Sigmoid colon (tissue), 7 donors: ENCODE measurements at regions of chr21 and their contacts with region 1.

Region 1: GRCh38 chr21:35051287-35051818 is 2.3 kb upstream of the RUNX1 start:
- DNase-seq: peak; percentile 90
- H3K4me3 ChIP-seq: no peak overlapping the region
- H3K27ac ChIP-seq: peak overlapping the region in 3 of 4 donors; percentile 69 to 80 (median 79)
- H3K4me1 ChIP-seq: peaks cover 0 to 77% (median 69%) of the 10 kb centered on the region in 4 donors
- H3K27me3 ChIP-seq: no peaks in the 10 kb centered on the region
- CTCF ChIP-seq: peak in 2 of 4 experiments; percentile 26 to 34
- EP300 ChIP-seq: no peak
- POLR2A ChIP-seq: no peak

Region 2: GRCh38 chr21:35011681-35012080 is 39.7 kb before region 1 on chr21:
- intact Hi-C with region 1: no loop called
- DNase-seq: no peak
- H3K4me3 ChIP-seq: no peak overlapping the region
- H3K27ac ChIP-seq: no peak overlapping the region
- H3K4me1 ChIP-seq: no peaks in the 10 kb centered on the region
- H3K27me3 ChIP-seq: no peaks in the 10 kb centered on the region
- CTCF ChIP-seq: no peak
- EP300 ChIP-seq: no peak
- POLR2A ChIP-seq: no peak

Region 3: GRCh38 chr21:35204850-35205541 is 153.6 kb after region 1 on chr21:
- intact Hi-C with region 1: loop called (anchors 1 kb)
- DNase-seq: peak; percentile 89
- H3K4me3 ChIP-seq: peak overlapping the region in 3 of 4 donors; percentile 23 to 25 (median 24)
- H3K27ac ChIP-seq: peak overlapping the region; percentile 31 to 82 (median 68)
- H3K4me1 ChIP-seq: peaks cover 0 to 52% (median 43%) of the 10 kb centered on the region in 4 donors
- H3K27me3 ChIP-seq: no peaks in the 10 kb centered on the region
- CTCF ChIP-seq: peak in 1 of 4 experiments; percentile 15
- EP300 ChIP-seq: peak in 1 of 4 donors; percentile 9
- POLR2A ChIP-seq: no peak

Region 4: DNA sequence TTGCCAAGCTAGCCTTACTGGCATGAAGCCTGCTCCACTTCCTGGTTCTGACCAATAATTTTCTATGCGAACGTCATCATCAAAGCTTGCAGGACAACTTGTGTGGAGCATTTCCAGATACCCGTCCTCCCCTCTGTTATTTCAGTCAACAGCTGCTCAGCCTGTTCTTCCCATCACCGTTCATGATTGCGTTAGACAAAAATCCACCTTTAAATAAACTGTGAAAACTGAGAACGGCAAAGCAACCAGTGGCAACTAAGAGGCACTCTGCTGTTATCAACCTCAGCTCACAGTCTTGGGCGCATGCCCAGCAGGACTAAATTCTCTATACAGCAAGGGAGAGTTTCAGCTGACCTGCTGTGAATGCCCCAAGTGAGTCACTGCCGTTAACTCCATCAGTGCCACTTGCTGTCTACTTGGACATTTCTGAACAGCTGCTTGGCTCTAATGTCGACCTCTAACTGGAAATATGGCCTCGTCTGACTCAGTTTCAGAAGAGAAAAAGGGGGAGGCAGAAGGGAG is 205.2 kb after region 1 on chr21:
- intact Hi-C with region 1: loop called (anchors 5 kb)
- DNase-seq: peak; percentile 84
- H3K4me3 ChIP-seq: peak overlapping the region in 2 of 4 donors; percentile 14 to 24
- H3K27ac ChIP-seq: peak overlapping the region; percentile 1 to 72 (median 34)
- H3K4me1 ChIP-seq: peaks cover 0 to 19% (median 15%) of the 10 kb centered on the region in 4 donors
- H3K27me3 ChIP-seq: no peaks in the 10 kb centered on the region
- CTCF ChIP-seq: no peak
- EP300 ChIP-seq: no peak
- POLR2A ChIP-seq: no peak

Region 5: DNA sequence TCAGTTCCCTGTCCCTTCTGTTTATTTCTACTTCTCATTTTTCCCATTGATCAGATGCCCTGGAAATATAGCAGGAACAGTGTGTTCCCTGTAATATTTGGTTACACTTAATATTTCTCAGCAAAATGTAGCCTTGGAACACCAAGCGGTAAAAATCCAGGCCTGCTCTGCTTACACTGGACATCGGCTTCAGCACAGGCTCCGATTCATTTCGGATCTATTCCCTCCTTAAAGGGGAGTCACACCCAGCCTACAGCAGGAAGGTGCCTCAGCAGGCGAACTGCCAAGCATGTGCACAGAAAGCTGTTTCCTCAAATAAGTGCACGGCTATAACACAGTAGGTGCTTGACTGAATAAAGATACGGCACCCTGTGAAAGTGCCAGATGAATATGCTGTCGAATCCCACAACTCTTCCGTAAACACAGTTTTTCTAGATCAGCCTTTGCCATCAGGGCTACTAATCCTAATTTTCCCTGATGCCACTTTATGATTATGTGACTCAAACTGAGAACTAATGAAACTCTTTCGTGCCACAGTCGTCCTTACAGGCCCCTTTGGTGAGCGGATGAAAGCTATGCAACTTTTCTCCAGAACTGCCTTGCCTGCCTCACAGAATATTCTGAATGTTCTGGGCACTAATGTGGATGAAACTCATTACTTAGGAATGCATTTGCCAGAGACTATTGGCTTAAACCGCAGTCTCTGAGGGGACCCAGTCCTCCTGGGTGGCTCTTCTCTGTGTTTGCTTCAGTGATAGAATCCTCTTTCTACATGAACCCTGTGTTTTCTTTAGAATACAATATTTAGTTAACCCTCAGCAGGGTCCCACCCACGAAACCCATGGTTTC is 273.2 kb after region 1 on chr21:
- intact Hi-C with region 1: loop called (anchors 2 kb)
- DNase-seq: peak; percentile 81
- H3K4me3 ChIP-seq: peak overlapping the region in 1 of 4 donors; percentile 0
- H3K27ac ChIP-seq: peak overlapping the region; percentile 56 to 91 (median 88)
- H3K4me1 ChIP-seq: peaks cover 0 to 49% (median 43%) of the 10 kb centered on the region in 4 donors
- H3K27me3 ChIP-seq: no peaks in the 10 kb centered on the region
- CTCF ChIP-seq: no peak
- EP300 ChIP-seq: peak in 2 of 4 donors; percentile 65 to 67
- POLR2A ChIP-seq: no peak

Region 6: GRCh38 chr21:35400233-35400957 is 349.0 kb after region 1 on chr21:
- intact Hi-C with region 1: loop called (anchors 2 kb)
- DNase-seq: no peak
- H3K4me3 ChIP-seq: no peak overlapping the region
- H3K27ac ChIP-seq: no peak overlapping the region
- H3K4me1 ChIP-seq: peaks cover 0 to 19% (median 6%) of the 10 kb centered on the region in 4 donors
- H3K27me3 ChIP-seq: no peaks in the 10 kb centered on the region
- CTCF ChIP-seq: peak; percentile 48 to 59 (median 54)
- EP300 ChIP-seq: no peak
- POLR2A ChIP-seq: no peak

Region 7: GRCh38 chr21:35932232-35932911 is 881.0 kb after region 1 on chr21:
- intact Hi-C with region 1: loop called (anchors 10 kb)
- DNase-seq: peak; percentile 88
- H3K4me3 ChIP-seq: no peak overlapping the region
- H3K27ac ChIP-seq: peak overlapping the region; percentile 33 to 66 (median 63)
- H3K4me1 ChIP-seq: peaks cover 0 to 27% (median 23%) of the 10 kb centered on the region in 4 donors
- H3K27me3 ChIP-seq: no peaks in the 10 kb centered on the region
- CTCF ChIP-seq: peak in 1 of 4 experiments; percentile 13
- EP300 ChIP-seq: peak in 3 of 4 donors; percentile 5 to 66 (median 53)
- POLR2A ChIP-seq: no peak

Region 8: DNA sequence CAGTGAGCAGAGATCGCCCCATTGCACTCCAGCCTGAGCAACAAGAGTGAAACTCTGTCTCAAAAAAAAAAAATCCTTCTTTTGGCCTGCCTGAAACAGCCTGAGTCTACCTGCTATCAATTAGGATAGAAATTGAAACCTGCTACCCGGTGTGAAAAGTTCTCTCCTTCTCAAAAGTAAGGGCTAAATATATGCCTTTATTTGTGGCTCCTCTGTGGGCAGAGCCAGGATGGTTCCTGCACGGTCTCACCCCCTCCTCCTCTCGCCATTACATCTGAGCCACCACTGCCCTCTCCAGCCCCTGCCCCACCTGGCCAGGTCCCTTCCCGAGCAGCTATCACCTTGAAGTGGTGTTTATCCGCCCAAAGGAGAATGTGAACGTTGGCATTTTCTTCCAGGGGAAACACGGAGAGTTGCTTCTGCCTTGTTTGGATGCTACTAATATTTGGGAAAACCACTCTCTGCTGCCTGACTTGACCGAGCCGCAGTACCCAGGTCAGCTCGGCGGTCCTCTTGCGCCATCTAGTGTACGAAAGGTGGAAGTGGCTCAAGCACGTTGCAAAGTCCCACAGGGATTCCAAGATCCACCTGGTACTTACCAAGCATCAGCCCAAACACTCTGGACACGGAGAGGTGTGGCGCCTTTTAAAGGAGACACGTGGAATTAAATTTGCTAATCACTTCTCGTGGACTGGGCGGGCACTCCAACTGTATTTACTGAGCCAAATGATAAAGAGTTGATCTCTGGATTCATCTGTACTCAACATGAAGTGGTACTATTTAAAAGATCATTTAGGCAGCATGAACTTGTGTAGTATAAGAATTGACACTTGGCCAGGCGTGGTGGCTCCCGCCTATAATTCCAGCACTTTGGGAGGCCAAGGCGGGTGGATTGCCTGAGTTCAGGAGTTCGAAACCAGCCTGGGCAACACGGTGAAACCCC is 977.0 kb after region 1 on chr21:
- intact Hi-C with region 1: loop called (anchors 5 kb)
- DNase-seq: peak; percentile 89
- H3K4me3 ChIP-seq: no peak overlapping the region
- H3K27ac ChIP-seq: no peak overlapping the region
- H3K4me1 ChIP-seq: peaks cover 0 to 10% (median 7%) of the 10 kb centered on the region in 4 donors
- H3K27me3 ChIP-seq: no peaks in the 10 kb centered on the region
- CTCF ChIP-seq: peak; percentile 75 to 92 (median 86)
- EP300 ChIP-seq: no peak
- POLR2A ChIP-seq: no peak